ENCODE measurements at regions of chr5 and their contacts with region 1.

Region 1: GRCh38 chr5:140710899-140711552 is 10.8 kb downstream of the ZMAT2 start:
- DNase-seq: peak; percentile 92
- H3K4me3 ChIP-seq: peak overlapping the region; percentile 45
- H3K27ac ChIP-seq: peak overlapping the region; percentile 95
- H3K4me1 ChIP-seq: no peaks in the 10 kb centered on the region
- H3K27me3 ChIP-seq: no peaks in the 10 kb centered on the region
- CTCF ChIP-seq: no peak

Region 2: GRCh38 chr5:140362860-140363630 is 348.0 kb before region 1 on chr5:
- intact Hi-C with region 1: loop called (anchors 10 kb)
- DNase-seq: peak; percentile 90
- H3K4me3 ChIP-seq: no peak overlapping the region
- H3K27ac ChIP-seq: no peak overlapping the region
- H3K4me1 ChIP-seq: no peaks in the 10 kb centered on the region
- H3K27me3 ChIP-seq: no peaks in the 10 kb centered on the region
- CTCF ChIP-seq: peak; percentile 93

Measured in colonic mucosa (tissue), 4 donors.